PC-9 (cell line): ENCODE measurements at regions of chr17 and their contacts with region 1.

Region 1: DNA sequence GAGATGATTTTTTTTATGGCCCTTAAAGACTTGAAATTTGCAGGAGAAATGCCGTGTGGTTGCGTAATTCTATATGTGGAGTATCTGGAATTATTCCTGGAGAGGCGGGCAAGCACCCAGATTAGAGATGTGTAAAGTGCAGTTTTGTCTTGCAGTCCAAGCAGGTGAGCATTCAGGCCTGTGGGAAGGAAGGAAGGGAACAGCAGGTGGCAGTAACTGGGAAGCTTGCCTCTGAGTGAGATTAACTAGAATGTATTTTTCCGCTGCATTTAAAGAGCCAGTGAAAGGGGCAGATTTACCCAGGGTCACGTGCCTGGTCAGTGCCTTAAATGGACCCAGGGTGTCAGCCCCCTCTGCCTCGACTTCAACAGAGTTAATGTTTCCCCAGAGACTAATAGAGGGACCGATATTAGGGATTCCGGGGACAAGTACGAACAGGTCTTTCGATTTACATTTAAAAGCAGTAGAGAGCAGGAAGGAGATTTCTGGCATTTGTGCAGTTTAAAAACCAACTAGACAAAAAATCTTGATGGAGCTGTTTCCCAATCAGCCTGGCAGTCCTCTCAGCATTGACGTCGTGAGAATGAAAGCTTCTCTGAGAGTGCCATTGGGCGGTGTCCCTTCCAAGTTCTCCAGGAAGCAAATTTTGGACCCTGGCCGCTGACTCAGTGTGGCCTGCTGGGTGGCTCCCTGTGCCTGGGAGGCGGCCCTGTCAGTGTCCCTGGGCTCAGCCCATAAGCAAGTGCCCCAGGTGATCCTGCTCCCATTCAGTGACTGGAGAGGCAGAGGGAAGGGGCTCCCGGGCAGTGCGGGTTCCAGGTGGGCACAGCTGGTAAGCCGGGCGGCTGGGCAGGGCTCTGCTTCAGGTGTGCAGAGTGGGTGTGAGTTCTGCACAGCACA is 38.2 kb downstream of the KSR1 start:
- DNase-seq: peak; percentile 76 to 84
- H3K4me3 ChIP-seq: peak overlapping the region; percentile 54; the same call in 1 of the 2 replicates
- H3K27ac ChIP-seq: peak overlapping the region; percentile 82
- H3K4me1 ChIP-seq: peaks cover 24% of the 10 kb centered on the region
- H3K27me3 ChIP-seq: no peaks in the 10 kb centered on the region
- CTCF ChIP-seq: peak; percentile 64

Region 2: DNA sequence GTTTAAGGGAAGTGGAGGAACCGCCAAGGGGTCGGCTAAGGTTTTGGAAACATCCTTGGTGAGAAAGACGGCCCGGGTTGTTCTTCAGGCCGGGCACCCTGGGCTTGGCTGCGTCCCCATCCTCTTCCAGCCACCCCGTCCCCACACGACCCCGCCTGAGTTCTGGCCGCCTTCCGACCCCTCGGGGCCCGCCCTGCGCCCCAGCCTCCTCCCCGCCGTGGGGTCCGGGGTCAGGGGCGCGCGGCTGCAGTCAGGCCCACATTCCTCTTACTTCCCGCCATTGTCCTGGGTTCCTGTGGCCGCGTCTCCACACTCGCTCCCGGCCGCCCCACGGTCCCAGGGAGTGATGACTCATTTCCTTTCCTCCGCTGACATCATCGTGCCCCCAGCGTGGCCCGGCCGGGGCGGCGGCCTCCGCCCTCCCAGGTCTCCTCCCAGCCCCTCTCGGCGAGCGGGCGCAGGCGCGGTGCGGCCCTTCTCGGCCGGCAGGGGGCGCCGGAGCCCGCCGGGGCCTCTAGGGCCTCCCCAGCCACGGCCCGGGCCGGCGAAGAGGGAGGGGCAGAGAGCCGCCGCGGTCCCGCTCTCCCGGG is 140.9 kb before region 1 on chr17:
- CTCF ChIA-PET with region 1: interaction called, 3 read pairs
- POLR2A ChIA-PET with region 1: no interaction called
- intact Hi-C with region 1: loop called (anchors 1 kb)
- DNase-seq: peak; percentile 76 to 92
- H3K4me3 ChIP-seq: peak overlapping the region; percentile 62
- H3K27ac ChIP-seq: peak overlapping the region; percentile 74
- H3K4me1 ChIP-seq: peaks cover 11% of the 10 kb centered on the region; the same call in 1 of the 2 replicates
- H3K27me3 ChIP-seq: no peaks in the 10 kb centered on the region
- CTCF ChIP-seq: peak; percentile 70

Region 3: DNA sequence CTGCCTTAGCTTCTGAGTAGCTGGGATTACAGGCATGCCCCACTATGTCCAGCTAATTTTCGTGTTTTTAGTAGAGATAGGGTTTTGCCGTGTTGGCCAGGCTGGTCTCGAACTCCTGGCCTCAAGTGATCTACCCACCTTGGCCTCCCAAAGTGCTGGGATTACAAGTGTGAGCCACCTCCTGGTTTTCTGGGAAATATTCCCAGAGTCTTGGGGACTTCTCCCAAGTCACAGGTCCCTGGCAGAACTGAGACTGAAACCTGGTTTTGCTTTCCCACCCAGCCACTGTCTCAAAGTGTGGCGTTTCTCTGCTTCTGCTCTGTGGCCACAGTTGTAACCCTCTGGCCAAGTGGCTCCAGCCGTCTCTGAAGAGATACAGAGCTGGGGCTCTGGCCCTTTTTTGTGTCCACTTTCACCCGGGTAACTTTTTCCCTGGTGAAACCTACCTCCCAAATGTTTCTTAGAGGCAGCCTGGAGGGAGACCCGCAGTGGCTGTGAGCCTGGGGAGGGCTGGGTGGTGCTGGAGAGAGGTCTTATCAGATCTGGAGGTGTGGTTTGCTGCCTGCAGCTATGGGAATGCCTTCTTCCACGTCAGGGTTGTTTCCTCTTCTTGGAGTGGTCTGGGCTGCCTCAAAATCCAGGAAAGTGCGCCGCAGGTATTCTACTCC is 33.1 kb before region 1 on chr17:
- CTCF ChIA-PET with region 1: no interaction called
- POLR2A ChIA-PET with region 1: no interaction called
- intact Hi-C with region 1: loop called (anchors 2 kb)
- DNase-seq: peak in 1 of 2 experiments; percentile 47
- H3K4me3 ChIP-seq: no peak overlapping the region
- H3K27ac ChIP-seq: no peak overlapping the region
- H3K4me1 ChIP-seq: peaks cover 30% of the 10 kb centered on the region
- H3K27me3 ChIP-seq: no peaks in the 10 kb centered on the region
- CTCF ChIP-seq: no peak

Region 4: GRCh38 chr17:27526604-27527230 is 32.3 kb after region 1 on chr17:
- CTCF ChIA-PET with region 1: interaction called, 3 read pairs
- POLR2A ChIA-PET with region 1: interaction called, 15 read pairs
- intact Hi-C with region 1: no loop called
- DNase-seq: no peak
- H3K4me3 ChIP-seq: no peak overlapping the region
- H3K27ac ChIP-seq: no peak overlapping the region
- H3K4me1 ChIP-seq: peaks cover 48% of the 10 kb centered on the region
- H3K27me3 ChIP-seq: no peaks in the 10 kb centered on the region
- CTCF ChIP-seq: no peak

Region 5: DNA sequence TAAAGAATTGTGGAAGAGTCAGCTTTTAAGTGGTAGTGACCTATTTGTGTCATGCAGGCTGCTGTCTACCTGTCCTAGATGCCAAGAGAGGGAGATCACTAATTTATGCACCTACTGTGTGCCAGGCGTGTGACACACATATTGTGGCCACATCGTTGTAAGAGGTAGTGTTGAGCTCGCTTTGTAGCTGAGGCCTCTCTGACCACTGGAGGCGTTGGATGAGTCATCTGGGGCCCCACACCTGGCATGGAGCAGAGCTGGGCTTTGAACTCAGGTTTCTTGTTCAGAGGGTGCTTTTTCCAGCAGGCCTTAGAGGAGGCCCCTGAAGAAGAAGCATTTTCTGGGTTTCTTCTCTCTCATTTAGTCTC is 84.3 kb after region 1 on chr17:
- CTCF ChIA-PET with region 1: interaction called, 4 read pairs
- POLR2A ChIA-PET with region 1: no interaction called
- intact Hi-C with region 1: loop called (anchors 5 kb)
- DNase-seq: no peak
- H3K4me3 ChIP-seq: no peak overlapping the region
- H3K27ac ChIP-seq: no peak overlapping the region
- H3K4me1 ChIP-seq: peaks cover 37% of the 10 kb centered on the region
- H3K27me3 ChIP-seq: no peaks in the 10 kb centered on the region
- CTCF ChIP-seq: no peak